Caco-2 (cell line): ENCODE measurements at regions of chr4 and their contacts with region 1.

Region 1: GRCh38 chr4:128776794-128777216 is 32.7 kb upstream of the JADE1 start:
- DNase-seq: peak; percentile 15 to 40
- H3K4me3 ChIP-seq: no peak overlapping the region
- H3K4me3 Mint-ChIP-seq: peak overlapping the region; percentile 48
- H3K27ac Mint-ChIP-seq: peak overlapping the region; percentile 37
- H3K4me1 ChIP-seq: peaks cover 21% of the 10 kb centered on the region
- H3K4me1 Mint-ChIP-seq: peaks cover 19% of the 10 kb centered on the region
- H3K27me3 ChIP-seq: no peaks in the 10 kb centered on the region
- H3K27me3 Mint-ChIP-seq: no peaks in the 10 kb centered on the region
- CTCF ChIP-seq: no peak

Region 2: DNA sequence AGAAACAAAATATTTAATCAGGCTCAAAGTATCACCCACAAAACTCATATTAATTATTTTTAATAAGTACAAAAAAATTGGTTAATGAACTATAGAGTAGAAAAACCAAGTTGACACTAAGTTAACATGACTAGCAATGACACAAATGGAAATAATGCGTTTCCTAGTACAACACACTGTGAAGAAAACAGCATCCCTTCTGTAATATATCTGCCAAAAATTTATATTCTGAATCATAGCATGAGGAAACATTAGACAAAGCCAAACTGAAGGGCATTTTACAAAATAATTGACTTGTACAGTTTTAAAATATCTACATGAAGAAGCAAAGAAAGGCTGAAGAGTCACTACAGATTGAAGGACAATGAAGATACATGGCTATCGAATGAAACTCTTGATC is 1621.7 kb before region 1 on chr4:
- CTCF ChIA-PET with region 1: no interaction called
- POLR2A ChIA-PET with region 1: no interaction called
- intact Hi-C with region 1: no loop called
- DNase-seq: no peak
- H3K4me3 ChIP-seq: no peak overlapping the region
- H3K4me3 Mint-ChIP-seq: no peak overlapping the region
- H3K27ac Mint-ChIP-seq: no peak overlapping the region
- H3K4me1 ChIP-seq: no peaks in the 10 kb centered on the region
- H3K4me1 Mint-ChIP-seq: no peaks in the 10 kb centered on the region
- H3K27me3 ChIP-seq: no peaks in the 10 kb centered on the region
- H3K27me3 Mint-ChIP-seq: no peaks in the 10 kb centered on the region
- CTCF ChIP-seq: no peak

Region 3: GRCh38 chr4:128725405-128726055 is 51.3 kb before region 1 on chr4:
- CTCF ChIA-PET with region 1: no interaction called
- POLR2A ChIA-PET with region 1: no interaction called
- intact Hi-C with region 1: loop called (anchors 5 kb)
- DNase-seq: no peak
- H3K4me3 ChIP-seq: no peak overlapping the region
- H3K4me3 Mint-ChIP-seq: no peak overlapping the region
- H3K27ac Mint-ChIP-seq: no peak overlapping the region
- H3K4me1 ChIP-seq: peaks cover 64% of the 10 kb centered on the region
- H3K4me1 Mint-ChIP-seq: peaks cover 26% of the 10 kb centered on the region
- H3K27me3 ChIP-seq: no peaks in the 10 kb centered on the region
- H3K27me3 Mint-ChIP-seq: no peaks in the 10 kb centered on the region
- CTCF ChIP-seq: no peak

Region 4: DNA sequence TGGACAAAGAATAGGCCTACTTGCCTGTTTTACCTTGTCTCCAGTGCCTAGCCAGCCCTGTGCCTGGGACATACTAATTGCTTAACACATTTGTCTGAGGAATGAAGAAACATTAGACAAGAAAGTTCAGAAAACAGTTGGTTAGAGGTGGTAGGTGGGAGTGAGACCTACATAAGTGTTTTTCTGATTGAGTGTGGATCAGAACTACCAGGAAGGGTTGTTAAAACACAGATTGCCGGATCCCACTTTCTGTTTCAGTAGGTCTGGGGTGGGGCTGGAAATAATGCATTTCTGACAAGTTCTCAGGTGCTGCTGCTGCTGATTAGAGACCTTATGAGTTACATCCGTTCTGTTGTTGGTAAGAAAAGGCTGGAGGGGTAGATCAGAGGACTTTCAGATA is 27.0 kb after region 1 on chr4:
- CTCF ChIA-PET with region 1: no interaction called
- POLR2A ChIA-PET with region 1: no interaction called
- intact Hi-C with region 1: no loop called
- DNase-seq: no peak
- H3K4me3 ChIP-seq: no peak overlapping the region
- H3K4me3 Mint-ChIP-seq: no peak overlapping the region
- H3K27ac Mint-ChIP-seq: no peak overlapping the region
- H3K4me1 ChIP-seq: peaks cover 45% of the 10 kb centered on the region
- H3K4me1 Mint-ChIP-seq: peaks cover 16% of the 10 kb centered on the region
- H3K27me3 ChIP-seq: no peaks in the 10 kb centered on the region
- H3K27me3 Mint-ChIP-seq: no peaks in the 10 kb centered on the region
- CTCF ChIP-seq: no peak